ENCODE measurements at regions of chr9 and their contacts with region 1.

Region 1: DNA sequence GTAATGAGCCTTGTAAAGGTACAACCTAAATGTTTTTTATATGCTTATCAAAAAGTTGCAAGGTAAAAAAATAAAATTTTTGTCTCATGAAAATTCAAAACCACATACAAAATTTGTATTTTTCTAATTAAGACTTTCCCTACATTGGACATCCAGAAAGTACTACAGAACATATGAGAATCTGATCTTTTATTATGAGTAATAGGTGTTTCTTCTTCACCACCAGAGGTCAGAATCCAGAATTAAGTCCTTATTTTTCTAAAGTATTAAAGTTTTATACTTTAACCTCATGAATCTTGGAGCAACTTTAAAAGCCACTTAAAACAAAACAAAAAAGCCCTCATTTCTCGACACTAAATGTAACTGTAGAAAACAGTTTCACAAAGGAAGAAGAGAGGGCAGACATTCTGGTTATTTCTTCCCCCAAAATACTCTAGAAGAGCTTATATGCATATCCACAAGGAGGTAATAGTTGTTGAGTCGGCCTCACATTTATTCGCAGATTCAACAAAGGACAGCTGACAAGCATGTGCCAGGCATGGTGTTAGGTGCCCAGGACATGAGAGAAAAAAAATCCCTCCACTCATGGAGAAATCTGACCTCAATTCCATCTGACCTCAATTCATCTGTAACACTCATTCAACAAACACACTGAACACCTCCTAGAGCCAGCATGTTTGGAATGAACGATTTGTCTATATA is 69.3 kb downstream of the MLLT3 start:
- DNase-seq: no peak
- H3K4me3 Mint-ChIP-seq: peak overlapping the region; percentile 41
- H3K27ac Mint-ChIP-seq: peak overlapping the region; percentile 25
- H3K4me1 Mint-ChIP-seq: peaks cover 67% of the 10 kb centered on the region
- H3K27me3 Mint-ChIP-seq: no peaks in the 10 kb centered on the region

Region 2: GRCh38 chr9:19976226-19976625 is 576.8 kb before region 1 on chr9:
- intact Hi-C with region 1: loop called (anchors 5 kb)
- DNase-seq: no peak
- H3K4me3 Mint-ChIP-seq: no peak overlapping the region
- H3K27ac Mint-ChIP-seq: peak overlapping the region; percentile 83
- H3K4me1 Mint-ChIP-seq: peaks cover 28% of the 10 kb centered on the region
- H3K27me3 Mint-ChIP-seq: no peaks in the 10 kb centered on the region

Region 3: DNA sequence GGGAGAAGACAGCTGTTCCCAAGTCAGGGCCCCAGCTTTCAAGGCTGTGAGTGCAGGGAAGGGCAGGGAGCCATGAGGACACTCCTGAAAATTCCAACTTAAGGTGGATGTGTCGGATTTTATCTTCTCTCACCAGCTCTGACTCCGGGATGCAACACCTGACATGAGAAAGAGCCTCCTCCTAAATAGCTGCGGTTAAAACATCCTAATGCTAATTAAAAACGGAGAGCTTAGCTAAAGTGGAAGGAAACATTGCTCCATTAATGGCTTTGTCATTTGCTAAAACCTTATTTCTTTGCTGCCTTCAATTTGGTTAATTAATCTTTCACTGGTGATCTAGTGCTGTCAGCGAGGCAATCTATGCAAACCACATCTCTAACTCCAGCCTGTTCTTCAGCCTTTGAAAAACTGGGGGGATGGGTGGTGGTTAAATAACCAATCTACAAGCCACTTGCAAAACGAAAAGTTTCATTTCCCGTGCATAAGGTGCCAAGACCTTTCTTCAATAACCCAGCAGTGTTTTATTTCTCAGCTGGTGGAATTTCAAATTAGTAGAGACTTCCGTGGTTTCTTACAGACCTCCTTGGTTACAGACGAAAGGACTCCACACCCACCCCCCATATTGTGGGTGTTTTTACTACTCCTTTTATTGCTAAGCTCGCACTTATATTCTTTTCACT is 310.4 kb before region 1 on chr9:
- intact Hi-C with region 1: loop called (anchors 5 kb)
- DNase-seq: peak; percentile 50
- H3K4me3 Mint-ChIP-seq: peak overlapping the region; percentile 22
- H3K27ac Mint-ChIP-seq: no peak overlapping the region
- H3K4me1 Mint-ChIP-seq: peaks cover 37% of the 10 kb centered on the region
- H3K27me3 Mint-ChIP-seq: peaks cover 28% of the 10 kb centered on the region

Region 4: GRCh38 chr9:20441711-20442423 is 111.2 kb before region 1 on chr9:
- intact Hi-C with region 1: loop called (anchors 5 kb)
- DNase-seq: no peak
- H3K4me3 Mint-ChIP-seq: no peak overlapping the region
- H3K27ac Mint-ChIP-seq: peak overlapping the region; percentile 24
- H3K4me1 Mint-ChIP-seq: peaks cover 36% of the 10 kb centered on the region
- H3K27me3 Mint-ChIP-seq: no peaks in the 10 kb centered on the region

Region 5: DNA sequence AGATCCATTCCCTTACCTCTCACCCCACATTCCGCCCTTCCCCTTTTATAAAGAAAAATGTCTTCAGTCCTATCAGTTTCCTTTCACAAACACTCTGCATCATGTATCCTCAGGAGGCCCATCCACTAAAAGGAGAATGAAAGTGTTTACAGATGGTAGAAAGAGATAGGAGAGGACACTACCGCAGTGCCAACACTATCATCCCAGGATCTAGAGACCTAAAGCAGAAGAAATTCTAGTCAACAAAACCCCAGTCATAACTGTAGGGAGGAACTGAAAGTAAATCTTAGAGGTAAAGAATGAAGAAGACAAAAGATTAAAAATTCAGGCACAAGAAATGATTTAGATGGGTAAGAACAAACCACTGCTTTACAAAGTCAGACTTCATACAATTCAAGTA is 44.8 kb before region 1 on chr9:
- intact Hi-C with region 1: loop called (anchors 2 kb)
- DNase-seq: peak; percentile 43
- H3K4me3 Mint-ChIP-seq: no peak overlapping the region
- H3K27ac Mint-ChIP-seq: peak overlapping the region; percentile 3
- H3K4me1 Mint-ChIP-seq: peaks cover 74% of the 10 kb centered on the region
- H3K27me3 Mint-ChIP-seq: no peaks in the 10 kb centered on the region

Region 6: GRCh38 chr9:20528253-20528652 is 24.8 kb before region 1 on chr9:
- intact Hi-C with region 1: loop called (anchors 2 kb)
- DNase-seq: no peak
- H3K4me3 Mint-ChIP-seq: no peak overlapping the region
- H3K27ac Mint-ChIP-seq: no peak overlapping the region
- H3K4me1 Mint-ChIP-seq: peaks cover 57% of the 10 kb centered on the region
- H3K27me3 Mint-ChIP-seq: no peaks in the 10 kb centered on the region

Measured in activated T-helper 2 cell treated with anti-CD3 and anti-CD28 coated beads, Interferon-gamma antibody, Interleukin-2, Interleukin-4, amounts not matched to agents 10 μg/mL and 5 μg/mL and 100 μg/mL, durations not matched to agents 14 hours and 24 hours and 36 hours (primary cell).